Mammary epithelial cell (primary cell): ENCODE measurements at regions of chr12 and their contacts with region 1.

Region 1: DNA sequence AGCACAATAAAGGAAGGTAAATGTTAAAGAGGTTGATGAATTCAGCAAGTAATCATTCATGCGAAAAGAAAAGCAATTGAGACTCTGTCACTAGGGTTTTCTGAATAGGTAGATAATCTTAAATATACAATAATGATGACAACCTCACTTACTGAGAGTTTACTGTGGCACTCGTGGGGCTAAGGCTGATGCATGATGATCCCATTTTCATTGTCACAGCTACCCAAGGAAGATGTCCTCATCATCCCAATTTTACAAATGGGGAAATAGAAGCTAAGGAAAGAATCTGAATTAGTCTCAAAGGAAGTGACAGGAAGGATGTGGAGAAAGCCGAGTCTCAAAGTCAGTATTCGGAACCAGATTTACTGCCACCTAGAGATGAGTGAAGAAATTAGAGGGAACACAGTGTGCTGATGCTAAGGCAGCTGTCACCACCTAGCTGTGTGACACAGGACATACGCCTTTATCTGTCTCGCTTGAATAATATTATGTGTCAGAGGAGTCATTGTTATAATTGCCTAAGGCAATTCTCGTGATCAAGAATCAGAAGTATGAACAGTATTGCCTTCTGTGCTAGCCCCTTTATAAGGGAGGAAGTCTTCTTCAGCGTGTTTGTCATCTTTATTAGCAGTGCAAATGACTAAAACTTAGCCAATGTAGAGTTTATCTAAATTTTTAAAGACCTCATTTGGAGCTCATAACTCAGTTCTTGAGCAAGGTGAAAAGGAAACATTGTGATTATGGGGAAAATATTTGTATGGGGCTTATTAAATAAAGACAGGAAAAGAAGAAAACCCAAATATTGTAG is 63.2 kb downstream of the ERGIC2 start:
- DNase-seq: peak; percentile 52
- H3K4me3 ChIP-seq: no peak overlapping the region
- H3K27ac ChIP-seq: no peak overlapping the region
- H3K4me1 ChIP-seq: peaks cover 10% of the 10 kb centered on the region
- H3K27me3 ChIP-seq: no peaks in the 10 kb centered on the region
- CTCF ChIP-seq: peak; percentile 49 to 84

Region 2: DNA sequence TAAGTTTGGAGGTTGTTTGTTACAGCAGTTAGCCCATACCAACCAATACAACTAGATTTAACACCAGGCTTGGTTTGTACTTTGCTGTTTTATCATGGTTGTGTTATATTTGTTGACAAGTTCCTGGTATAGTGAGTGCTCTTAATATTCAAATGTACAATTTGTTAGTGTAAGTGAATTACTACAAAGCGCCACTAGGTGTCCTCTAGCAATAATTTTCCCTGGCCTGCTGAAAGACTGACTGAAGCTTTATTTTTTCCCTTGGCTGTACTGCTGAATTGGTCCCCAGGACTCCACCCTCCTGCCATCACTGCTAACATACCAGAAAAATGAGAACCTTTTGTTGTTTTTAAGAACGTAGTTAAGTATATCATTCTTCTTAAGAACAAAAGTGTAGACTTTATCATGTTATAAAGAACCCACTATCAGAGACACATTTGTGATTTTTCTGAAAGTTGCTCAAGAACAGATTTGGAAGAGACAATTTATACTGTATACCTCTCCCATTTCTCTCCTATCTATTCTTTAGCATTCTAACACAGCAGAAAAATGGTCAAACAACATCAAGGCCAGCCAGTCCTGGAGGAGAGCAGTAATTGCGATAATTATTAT is 244.0 kb before region 1 on chr12:
- CTCF ChIA-PET with region 1: interaction called, 4 read pairs
- dilution Hi-C with region 1: no loop called
- in situ Hi-C with region 1: loop called (anchors 25 kb)
- intact Hi-C with region 1: loop called (anchors 5 kb)
- DNase-seq: peak; percentile 39
- H3K4me3 ChIP-seq: no peak overlapping the region
- H3K27ac ChIP-seq: no peak overlapping the region
- H3K4me1 ChIP-seq: peaks cover 4% of the 10 kb centered on the region
- H3K27me3 ChIP-seq: no peaks in the 10 kb centered on the region
- CTCF ChIP-seq: peak; percentile 71 to 77

Region 3: GRCh38 chr12:29088611-29089219 is 229.0 kb before region 1 on chr12:
- CTCF ChIA-PET with region 1: no interaction called
- dilution Hi-C with region 1: no loop called
- in situ Hi-C with region 1: loop called (anchors 25 kb)
- intact Hi-C with region 1: loop called (anchors 1 kb)
- DNase-seq: peak; percentile 12
- H3K4me3 ChIP-seq: no peak overlapping the region
- H3K27ac ChIP-seq: no peak overlapping the region
- H3K4me1 ChIP-seq: no peaks in the 10 kb centered on the region
- H3K27me3 ChIP-seq: no peaks in the 10 kb centered on the region
- CTCF ChIP-seq: peak; percentile 23 to 59